ENCODE measurements at regions of chr2 and their contacts with region 1.

Region 1: DNA sequence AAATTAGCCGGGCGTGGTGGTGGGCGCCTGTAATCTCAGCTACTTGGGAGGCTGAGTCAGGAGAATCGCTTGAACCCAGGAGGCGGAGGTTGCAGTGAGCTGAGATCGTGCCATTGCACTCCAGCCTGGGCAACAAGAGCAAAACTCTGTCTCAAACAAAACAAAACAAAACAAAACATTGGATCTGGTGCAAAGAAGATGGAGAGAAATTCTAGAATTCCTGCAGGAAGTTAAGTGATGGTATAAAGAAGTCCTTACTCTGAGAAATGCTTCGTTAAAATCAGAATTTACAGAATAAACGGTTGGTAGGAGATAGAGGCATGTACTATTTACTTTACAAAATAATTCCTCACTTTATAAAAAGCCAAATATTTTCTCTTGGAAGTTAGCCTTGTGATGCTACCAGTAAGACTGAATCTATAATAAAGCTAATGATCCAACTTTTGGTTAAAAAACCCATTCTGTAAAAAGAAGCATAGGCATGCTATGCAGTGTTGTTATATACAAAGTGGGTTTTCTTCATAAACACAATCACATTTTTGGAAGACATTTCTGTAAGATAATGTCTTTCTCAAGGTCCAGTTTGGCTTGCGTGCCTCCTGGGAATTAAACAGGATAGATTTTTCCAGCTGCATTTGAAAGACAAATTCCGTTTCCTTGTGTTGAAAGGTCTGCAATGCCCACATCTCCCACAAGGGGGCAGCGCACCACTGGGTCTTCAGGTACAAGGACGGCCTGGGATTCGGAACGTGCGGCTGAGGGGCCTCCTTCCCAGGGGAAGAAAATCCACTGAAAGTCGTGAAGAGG is 35.6 kb upstream of the PNO1 start:
- DNase-seq: peak; percentile 48 to 85 (median 78)
- ATAC-seq: peak; percentile 69
- H3K4me3 ChIP-seq: no peak overlapping the region
- H3K4me3 Mint-ChIP-seq: peak overlapping the region; percentile 35
- H3K27ac ChIP-seq: no peak overlapping the region
- H3K27ac Mint-ChIP-seq: no peak overlapping the region
- H3K4me1 ChIP-seq: peaks cover 4% of the 10 kb centered on the region
- H3K4me1 Mint-ChIP-seq: peaks cover 3% of the 10 kb centered on the region
- H3K27me3 ChIP-seq: no peaks in the 10 kb centered on the region
- H3K27me3 Mint-ChIP-seq: no peaks in the 10 kb centered on the region
- CTCF ChIP-seq: peak; percentile 99

Region 2: DNA sequence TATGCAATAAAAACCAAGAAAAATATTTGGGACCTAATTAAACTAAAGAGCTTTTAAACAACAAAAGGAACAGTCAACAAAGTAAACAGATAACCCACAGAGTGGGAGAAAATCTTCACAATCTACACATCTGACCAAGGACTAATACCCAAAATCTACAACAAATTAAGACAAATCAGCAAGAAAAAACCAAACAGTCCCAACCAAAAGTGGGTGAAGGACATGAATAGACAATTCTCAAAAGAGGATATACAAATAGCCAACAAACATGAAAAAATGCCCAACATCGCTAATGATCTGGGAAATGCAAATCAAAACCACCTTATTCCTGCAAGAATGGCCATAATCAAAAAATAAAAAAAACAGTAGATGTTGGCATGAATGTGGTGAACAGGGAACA is 309.4 kb before region 1 on chr2:
- CTCF ChIA-PET with region 1: no interaction called
- POLR2A ChIA-PET with region 1: no interaction called
- intact Hi-C with region 1: no loop called
- DNase-seq: no peak
- ATAC-seq: no peak
- H3K4me3 ChIP-seq: no peak overlapping the region
- H3K4me3 Mint-ChIP-seq: no peak overlapping the region
- H3K27ac ChIP-seq: no peak overlapping the region
- H3K27ac Mint-ChIP-seq: no peak overlapping the region
- H3K4me1 ChIP-seq: no peaks in the 10 kb centered on the region
- H3K4me1 Mint-ChIP-seq: no peaks in the 10 kb centered on the region
- H3K27me3 ChIP-seq: no peaks in the 10 kb centered on the region
- H3K27me3 Mint-ChIP-seq: peaks cover 15% of the 10 kb centered on the region
- CTCF ChIP-seq: no peak

Region 3: GRCh38 chr2:68135448-68136320 is 13.6 kb after region 1 on chr2:
- CTCF ChIA-PET with region 1: interaction called, 10 read pairs
- POLR2A ChIA-PET with region 1: no interaction called
- intact Hi-C with region 1: no loop called
- DNase-seq: no peak
- ATAC-seq: no peak
- H3K4me3 ChIP-seq: no peak overlapping the region
- H3K4me3 Mint-ChIP-seq: no peak overlapping the region
- H3K27ac ChIP-seq: no peak overlapping the region
- H3K27ac Mint-ChIP-seq: no peak overlapping the region
- H3K4me1 ChIP-seq: no peaks in the 10 kb centered on the region
- H3K4me1 Mint-ChIP-seq: no peaks in the 10 kb centered on the region
- H3K27me3 ChIP-seq: no peaks in the 10 kb centered on the region
- H3K27me3 Mint-ChIP-seq: no peaks in the 10 kb centered on the region
- CTCF ChIP-seq: no peak

Region 4: GRCh38 chr2:68157402-68158133 is 35.5 kb after region 1 on chr2 and contains the start of gene PNO1:
- CTCF ChIA-PET with region 1: interaction called, 14 read pairs
- POLR2A ChIA-PET with region 1: no interaction called
- intact Hi-C with region 1: loop called in 1 of 2 experiments (anchors 5 kb)
- DNase-seq: peak; percentile 95 to 98 (median 97)
- ATAC-seq: peak; percentile 95
- H3K4me3 ChIP-seq: peak within 1 kb of the TSS; percentile 66 to 73
- H3K4me3 Mint-ChIP-seq: peak within 1 kb of the TSS; percentile 97
- H3K27ac ChIP-seq: peak within 1 kb of the TSS; percentile 90 to 94
- H3K27ac Mint-ChIP-seq: peak within 1 kb of the TSS; percentile 100
- H3K4me1 ChIP-seq: peaks cover 34% of the 10 kb centered on the region
- H3K4me1 Mint-ChIP-seq: peaks cover 52% of the 10 kb centered on the region
- H3K27me3 ChIP-seq: no peaks in the 10 kb centered on the region
- H3K27me3 Mint-ChIP-seq: no peaks in the 10 kb centered on the region
- CTCF ChIP-seq: no peak
- total RNA-seq, gene PNO1: 35.3 to 36.0 TPM

Region 5: GRCh38 chr2:68282811-68283418 is 160.8 kb after region 1 on chr2:
- CTCF ChIA-PET with region 1: interaction called, 176 read pairs
- POLR2A ChIA-PET with region 1: interaction called, 6 read pairs
- intact Hi-C with region 1: loop called (anchors 1 kb)
- DNase-seq: peak in 4 of 9 experiments; percentile 9 to 70 (median 40)
- ATAC-seq: peak; percentile 71
- H3K4me3 ChIP-seq: no peak overlapping the region
- H3K4me3 Mint-ChIP-seq: no peak overlapping the region
- H3K27ac ChIP-seq: no peak overlapping the region
- H3K27ac Mint-ChIP-seq: no peak overlapping the region
- H3K4me1 ChIP-seq: no peaks in the 10 kb centered on the region
- H3K4me1 Mint-ChIP-seq: no peaks in the 10 kb centered on the region
- H3K27me3 ChIP-seq: peaks cover 0 to 5% of the 10 kb centered on the region in 2 experiments
- H3K27me3 Mint-ChIP-seq: peaks cover 11% of the 10 kb centered on the region
- CTCF ChIP-seq: peak; percentile 80

Region 6: DNA sequence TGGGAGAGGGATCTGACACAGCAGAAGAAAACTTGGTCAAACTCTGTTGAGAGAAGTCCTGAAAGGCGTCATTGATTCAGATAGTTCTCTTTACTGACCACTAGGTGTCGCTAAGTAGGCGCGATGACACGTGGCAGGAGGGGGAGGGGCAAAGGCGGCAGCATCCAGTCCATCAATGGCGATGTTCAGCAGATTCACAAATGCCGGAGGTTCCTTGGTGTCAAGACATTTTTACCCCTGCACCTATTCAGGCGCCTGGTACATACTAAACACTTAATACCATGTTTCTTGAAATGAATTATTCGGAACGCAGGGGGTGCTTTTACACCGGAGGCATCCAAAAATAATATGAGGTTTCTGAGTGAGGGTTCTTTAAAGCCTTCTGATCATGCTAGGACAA is 240.0 kb after region 1 on chr2:
- CTCF ChIA-PET with region 1: no interaction called
- POLR2A ChIA-PET with region 1: no interaction called
- intact Hi-C with region 1: loop called in 1 of 2 experiments (anchors 5 kb)
- DNase-seq: peak; percentile 67 to 92 (median 80)
- ATAC-seq: peak; percentile 90
- H3K4me3 ChIP-seq: peak overlapping the region; percentile 16 to 32
- H3K4me3 Mint-ChIP-seq: peak overlapping the region; percentile 69
- H3K27ac ChIP-seq: peak overlapping the region in 1 of 2 experiments; percentile 72
- H3K27ac Mint-ChIP-seq: peak overlapping the region; percentile 33
- H3K4me1 ChIP-seq: peaks cover 9% of the 10 kb centered on the region
- H3K4me1 Mint-ChIP-seq: peaks cover 25% of the 10 kb centered on the region
- H3K27me3 ChIP-seq: no peaks in the 10 kb centered on the region
- H3K27me3 Mint-ChIP-seq: no peaks in the 10 kb centered on the region
- CTCF ChIP-seq: peak; percentile 73

Measured in CD8-positive, alpha-beta T cell (primary cell).